ENCODE measurements at regions of chr17 and their contacts with region 1.

Region 1: GRCh38 chr17:28494445-28495188 is 11.5 kb upstream of the FOXN1 start:
- DNase-seq: peak; percentile 66
- ATAC-seq: peak; percentile 68 to 77

Region 2: DNA sequence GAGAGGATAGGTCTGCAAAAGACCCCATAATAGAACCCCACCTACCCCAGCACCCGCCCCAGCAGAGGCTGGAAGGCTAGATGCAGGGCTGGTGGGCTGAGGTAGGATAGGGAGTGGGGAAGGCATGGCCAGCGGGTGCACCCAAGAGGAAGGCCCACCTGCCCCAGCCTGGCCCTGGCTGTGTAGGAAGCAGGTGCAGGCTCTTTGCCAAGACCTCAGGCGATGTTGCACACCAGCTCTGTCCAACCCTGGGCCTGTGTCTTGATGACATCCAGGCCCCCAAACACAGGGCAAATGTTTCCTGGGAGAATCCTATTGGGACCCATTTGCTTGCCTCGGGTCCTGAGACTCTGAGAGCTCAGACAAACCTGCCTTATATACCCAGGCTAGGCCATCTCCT is 45.6 kb after region 1 on chr17:
- intact Hi-C with region 1: loop called in 1 of 2 experiments (anchors 5 kb)
- DNase-seq: no peak
- ATAC-seq: no peak

Measured in left cardiac atrium (tissue), 4 donors.